Activated CD4-positive, alpha-beta memory T cell treated with anti-CD3 and anti-CD28 coated beads for 36 hours (primary cell): ENCODE measurements at regions of chrX and their contacts with region 1.

Region 1: GRCh38 chrX:27186664-27187063 is 276.5 kb downstream of the PPP4R3C start:
- DNase-seq: peak; percentile 29
- H3K4me3 Mint-ChIP-seq: no peak overlapping the region
- H3K27ac Mint-ChIP-seq: no peak overlapping the region
- H3K4me1 Mint-ChIP-seq: no peaks in the 10 kb centered on the region
- H3K27me3 Mint-ChIP-seq: no peaks in the 10 kb centered on the region

Region 2: GRCh38 chrX:26651755-26652154 is 534.9 kb before region 1 on chrX:
- CTCF ChIA-PET with region 1: interaction called, 5 read pairs
- POLR2A ChIA-PET with region 1: no interaction called
- intact Hi-C with region 1: loop called (anchors 5 kb)
- DNase-seq: no peak
- H3K4me3 Mint-ChIP-seq: no peak overlapping the region
- H3K27ac Mint-ChIP-seq: no peak overlapping the region
- H3K4me1 Mint-ChIP-seq: no peaks in the 10 kb centered on the region
- H3K27me3 Mint-ChIP-seq: no peaks in the 10 kb centered on the region

Region 3: DNA sequence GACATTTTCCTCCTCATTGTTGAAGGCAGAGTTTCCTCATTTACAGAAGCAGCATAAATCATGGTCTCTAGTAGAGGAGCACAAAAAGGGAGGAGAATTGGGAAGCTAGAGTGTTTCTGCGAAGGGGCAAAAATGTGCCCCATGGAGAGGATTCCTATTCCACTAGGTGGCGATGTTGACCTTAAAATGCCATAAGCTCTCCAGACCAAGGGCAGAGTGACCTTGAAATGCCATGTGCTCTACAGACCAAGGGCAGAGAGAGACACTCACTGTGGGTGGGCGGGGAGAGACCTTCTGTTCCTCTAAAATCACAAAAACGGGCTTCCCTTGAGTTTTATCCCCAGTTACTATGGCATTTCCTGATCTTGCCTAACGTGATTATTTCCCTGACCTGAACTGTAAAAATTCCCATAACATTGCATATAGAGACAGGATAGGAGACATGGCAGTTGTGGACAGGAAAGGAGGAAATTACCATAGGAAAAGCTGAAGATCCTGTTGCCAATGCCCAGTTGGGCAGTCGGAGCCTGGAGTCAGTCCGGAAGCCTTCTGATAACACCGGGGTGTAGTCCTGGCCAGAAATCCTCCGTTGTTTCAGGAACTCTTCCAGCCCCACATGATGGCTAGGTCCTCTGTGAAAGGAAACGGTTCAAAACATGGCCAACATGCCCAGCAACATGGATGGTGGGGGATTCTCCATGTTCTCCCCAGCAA is 403.0 kb before region 1 on chrX:
- CTCF ChIA-PET with region 1: interaction called, 4 read pairs
- POLR2A ChIA-PET with region 1: no interaction called
- intact Hi-C with region 1: loop called (anchors 2 kb)
- DNase-seq: no peak
- H3K4me3 Mint-ChIP-seq: no peak overlapping the region
- H3K27ac Mint-ChIP-seq: no peak overlapping the region
- H3K4me1 Mint-ChIP-seq: no peaks in the 10 kb centered on the region
- H3K27me3 Mint-ChIP-seq: no peaks in the 10 kb centered on the region

Region 4: GRCh38 chrX:28311466-28311865 is 1124.8 kb after region 1 on chrX:
- CTCF ChIA-PET with region 1: no interaction called
- POLR2A ChIA-PET with region 1: no interaction called
- intact Hi-C with region 1: no loop called
- DNase-seq: no peak
- H3K4me3 Mint-ChIP-seq: no peak overlapping the region
- H3K27ac Mint-ChIP-seq: no peak overlapping the region
- H3K4me1 Mint-ChIP-seq: no peaks in the 10 kb centered on the region
- H3K27me3 Mint-ChIP-seq: no peaks in the 10 kb centered on the region